ENCODE measurements at regions of chr6 and their contacts with region 1.

Region 1: DNA sequence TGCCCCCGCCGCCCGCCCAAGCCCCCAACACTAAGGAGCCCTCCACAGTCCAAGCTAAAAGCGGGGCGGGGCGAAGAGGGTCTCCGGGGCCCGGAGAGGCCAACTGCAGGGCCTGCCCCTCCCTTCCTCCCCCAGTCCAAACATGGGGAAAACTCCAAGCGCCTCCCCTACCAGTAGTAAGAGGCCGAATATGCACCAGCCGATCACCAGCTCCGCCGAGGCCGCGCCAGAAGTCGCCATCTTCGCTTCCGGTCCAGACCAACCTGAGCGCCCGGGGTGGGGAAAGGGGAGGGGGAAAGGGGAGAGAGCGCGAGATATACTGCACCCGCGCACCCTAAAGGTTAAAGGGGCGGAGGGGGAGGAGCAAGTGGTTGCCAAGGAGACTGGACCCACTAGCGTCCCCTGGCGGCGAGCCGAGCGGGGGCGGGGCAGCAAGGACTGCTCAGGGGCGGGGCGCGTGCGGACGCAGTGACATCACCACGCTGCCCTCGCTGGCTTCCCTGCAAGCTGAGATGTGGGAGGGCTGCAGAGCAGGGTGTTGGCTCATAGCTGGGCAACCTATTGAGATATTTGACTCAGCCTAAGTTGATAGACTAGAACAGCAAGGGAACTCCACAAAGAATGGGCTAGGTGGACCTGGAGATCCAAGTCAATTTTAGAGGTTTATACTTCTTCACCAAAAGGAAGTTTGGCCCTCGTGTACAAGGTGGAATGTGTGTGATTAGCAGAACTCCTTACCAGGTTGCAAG is at the start of gene LMBRD1:
- DNase-seq: peak; percentile 98 to 100
- ATAC-seq: peak; percentile 84 to 98 (median 87)
- H3K4me3 ChIP-seq: peak within 1 kb of the TSS; percentile 71
- H3K4me3 Mint-ChIP-seq: peak within 1 kb of the TSS; percentile 94
- H3K27ac ChIP-seq: peak within 1 kb of the TSS; percentile 95
- H3K27ac Mint-ChIP-seq: peak within 1 kb of the TSS; percentile 94 to 95
- H3K4me1 ChIP-seq: peaks cover 9% of the 10 kb centered on the region
- H3K4me1 Mint-ChIP-seq: peaks cover 34 to 40% of the 10 kb centered on the region in 2 donors
- H3K27me3 ChIP-seq: no peaks in the 10 kb centered on the region
- H3K27me3 Mint-ChIP-seq: no peaks in the 10 kb centered on the region
- CTCF ChIP-seq: peak; percentile 98
- total RNA-seq, gene LMBRD1: 41.0 to 43.1 (median 41.1) TPM

Region 2: GRCh38 chr6:69542494-69542893 is 254.3 kb before region 1 on chr6:
- intact Hi-C with region 1: no loop called
- DNase-seq: no peak
- ATAC-seq: no peak
- H3K4me3 ChIP-seq: no peak overlapping the region
- H3K4me3 Mint-ChIP-seq: no peak overlapping the region
- H3K27ac ChIP-seq: no peak overlapping the region
- H3K27ac Mint-ChIP-seq: no peak overlapping the region
- H3K4me1 ChIP-seq: no peaks in the 10 kb centered on the region
- H3K4me1 Mint-ChIP-seq: no peaks in the 10 kb centered on the region
- H3K27me3 ChIP-seq: no peaks in the 10 kb centered on the region
- H3K27me3 Mint-ChIP-seq: no peaks in the 10 kb centered on the region
- CTCF ChIP-seq: no peak

Region 3: GRCh38 chr6:69816026-69816425 is 19.2 kb after region 1 on chr6:
- intact Hi-C with region 1: loop called (anchors 2 kb)
- DNase-seq: peak in 1 of 2 donors; percentile 53
- ATAC-seq: peak in 2 of 3 donors; percentile 71 to 80
- H3K4me3 ChIP-seq: no peak overlapping the region
- H3K4me3 Mint-ChIP-seq: peak overlapping the region; percentile 57
- H3K27ac ChIP-seq: peak overlapping the region; percentile 54
- H3K27ac Mint-ChIP-seq: peak overlapping the region; percentile 67 to 82
- H3K4me1 ChIP-seq: peaks cover 19% of the 10 kb centered on the region
- H3K4me1 Mint-ChIP-seq: peaks cover 29 to 41% of the 10 kb centered on the region in 2 donors
- H3K27me3 ChIP-seq: no peaks in the 10 kb centered on the region
- H3K27me3 Mint-ChIP-seq: no peaks in the 10 kb centered on the region
- CTCF ChIP-seq: no peak

Region 4: GRCh38 chr6:71288228-71289001 is 1491.6 kb after region 1 on chr6 and contains the start of gene OGFRL1:
- intact Hi-C with region 1: loop called (anchors 10 kb)
- DNase-seq: peak; percentile 70 to 84
- ATAC-seq: peak; percentile 82 to 94 (median 87)
- H3K4me3 ChIP-seq: peak within 1 kb of the TSS; percentile 71
- H3K4me3 Mint-ChIP-seq: peak within 1 kb of the TSS; percentile 89
- H3K27ac ChIP-seq: peak within 1 kb of the TSS; percentile 91
- H3K27ac Mint-ChIP-seq: peak within 1 kb of the TSS; percentile 72 to 85
- H3K4me1 ChIP-seq: peaks cover 33% of the 10 kb centered on the region
- H3K4me1 Mint-ChIP-seq: peaks cover 41 to 42% of the 10 kb centered on the region in 2 donors
- H3K27me3 ChIP-seq: no peaks in the 10 kb centered on the region
- H3K27me3 Mint-ChIP-seq: peaks cover 0 to 2% of the 10 kb centered on the region in 2 donors
- CTCF ChIP-seq: no peak
- total RNA-seq, gene OGFRL1: 22.9 to 30.7 (median 25.6) TPM